CD4-positive, alpha-beta T cell (primary cell): ENCODE measurements at regions of chr13 and their contacts with region 1.

Region 1: GRCh38 chr13:109786457-109787134 is at the start of gene IRS2:
- DNase-seq: peak; percentile 90 to 98 (median 94)
- ATAC-seq: peak; percentile 80
- H3K4me3 ChIP-seq: peak within 1 kb of the TSS; percentile 67
- H3K4me3 Mint-ChIP-seq: peak within 1 kb of the TSS; percentile 94
- H3K27ac ChIP-seq: peak within 1 kb of the TSS in 1 of 2 donors; percentile 59
- H3K27ac Mint-ChIP-seq: peak within 1 kb of the TSS; percentile 75
- H3K4me1 ChIP-seq: peaks cover 34% of the 10 kb centered on the region
- H3K4me1 Mint-ChIP-seq: peaks cover 27% of the 10 kb centered on the region
- H3K27me3 ChIP-seq: no peaks in the 10 kb centered on the region
- H3K27me3 Mint-ChIP-seq: peaks cover 4% of the 10 kb centered on the region
- CTCF ChIP-seq: no peak
- total RNA-seq, gene IRS2: 188 to 193 TPM

Region 2: GRCh38 chr13:108961542-108962125 is 825.0 kb before region 1 on chr13:
- CTCF ChIA-PET with region 1: no interaction called
- POLR2A ChIA-PET with region 1: no interaction called
- intact Hi-C with region 1: loop called (anchors 1 kb)
- DNase-seq: peak in 4 of 14 experiments; percentile 1 to 66 (median 62)
- ATAC-seq: peak; percentile 54
- H3K4me3 ChIP-seq: no peak overlapping the region
- H3K4me3 Mint-ChIP-seq: no peak overlapping the region
- H3K27ac ChIP-seq: no peak overlapping the region
- H3K27ac Mint-ChIP-seq: no peak overlapping the region
- H3K4me1 ChIP-seq: no peaks in the 10 kb centered on the region
- H3K4me1 Mint-ChIP-seq: no peaks in the 10 kb centered on the region
- H3K27me3 ChIP-seq: no peaks in the 10 kb centered on the region
- H3K27me3 Mint-ChIP-seq: peaks cover 2% of the 10 kb centered on the region
- CTCF ChIP-seq: peak; percentile 91

Region 3: GRCh38 chr13:109427148-109427547 is 359.4 kb before region 1 on chr13:
- CTCF ChIA-PET with region 1: no interaction called
- POLR2A ChIA-PET with region 1: no interaction called
- intact Hi-C with region 1: loop called in 1 of 2 experiments (anchors 5 kb)
- DNase-seq: no peak
- ATAC-seq: no peak
- H3K4me3 ChIP-seq: no peak overlapping the region
- H3K4me3 Mint-ChIP-seq: no peak overlapping the region
- H3K27ac ChIP-seq: no peak overlapping the region
- H3K27ac Mint-ChIP-seq: no peak overlapping the region
- H3K4me1 ChIP-seq: no peaks in the 10 kb centered on the region
- H3K4me1 Mint-ChIP-seq: no peaks in the 10 kb centered on the region
- H3K27me3 ChIP-seq: no peaks in the 10 kb centered on the region
- H3K27me3 Mint-ChIP-seq: peaks cover 14% of the 10 kb centered on the region
- CTCF ChIP-seq: no peak

Region 4: GRCh38 chr13:109646423-109646822 is 140.2 kb before region 1 on chr13:
- CTCF ChIA-PET with region 1: no interaction called
- POLR2A ChIA-PET with region 1: no interaction called
- intact Hi-C with region 1: no loop called
- DNase-seq: no peak
- ATAC-seq: no peak
- H3K4me3 ChIP-seq: no peak overlapping the region
- H3K4me3 Mint-ChIP-seq: no peak overlapping the region
- H3K27ac ChIP-seq: no peak overlapping the region
- H3K27ac Mint-ChIP-seq: no peak overlapping the region
- H3K4me1 ChIP-seq: no peaks in the 10 kb centered on the region
- H3K4me1 Mint-ChIP-seq: no peaks in the 10 kb centered on the region
- H3K27me3 ChIP-seq: no peaks in the 10 kb centered on the region
- H3K27me3 Mint-ChIP-seq: peaks cover 3% of the 10 kb centered on the region
- CTCF ChIP-seq: no peak

Region 5: GRCh38 chr13:109756778-109757177 is 29.8 kb before region 1 on chr13:
- CTCF ChIA-PET with region 1: no interaction called
- POLR2A ChIA-PET with region 1: interaction called, 3 read pairs
- intact Hi-C with region 1: loop called in 1 of 2 experiments (anchors 5 kb)
- DNase-seq: no peak
- ATAC-seq: no peak
- H3K4me3 ChIP-seq: no peak overlapping the region
- H3K4me3 Mint-ChIP-seq: no peak overlapping the region
- H3K27ac ChIP-seq: no peak overlapping the region
- H3K27ac Mint-ChIP-seq: peak overlapping the region; percentile 26
- H3K4me1 ChIP-seq: peaks cover 2% of the 10 kb centered on the region
- H3K4me1 Mint-ChIP-seq: peaks cover 33% of the 10 kb centered on the region
- H3K27me3 ChIP-seq: no peaks in the 10 kb centered on the region
- H3K27me3 Mint-ChIP-seq: no peaks in the 10 kb centered on the region
- CTCF ChIP-seq: no peak

Region 6: DNA sequence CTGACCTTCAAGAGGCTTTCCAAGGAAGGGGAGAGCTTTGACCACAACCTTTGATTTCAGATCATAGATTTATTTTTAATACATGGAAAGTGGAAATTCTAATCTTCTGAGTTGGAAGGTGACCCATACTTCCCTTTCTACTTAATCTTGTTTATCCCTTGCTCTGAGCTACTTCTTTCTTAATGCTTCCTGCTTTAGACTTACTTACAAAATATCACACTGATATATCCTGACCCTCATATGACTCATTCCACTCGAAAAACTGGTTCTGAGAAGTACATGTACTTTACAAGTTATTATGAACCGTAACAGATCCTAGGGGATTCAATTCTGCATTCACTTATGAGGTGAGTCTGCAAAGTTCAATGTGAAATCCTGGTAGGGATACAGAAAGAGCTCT is 76.0 kb after region 1 on chr13:
- CTCF ChIA-PET with region 1: no interaction called
- POLR2A ChIA-PET with region 1: no interaction called
- intact Hi-C with region 1: no loop called
- DNase-seq: no peak
- ATAC-seq: no peak
- H3K4me3 ChIP-seq: no peak overlapping the region
- H3K4me3 Mint-ChIP-seq: no peak overlapping the region
- H3K27ac ChIP-seq: no peak overlapping the region
- H3K27ac Mint-ChIP-seq: no peak overlapping the region
- H3K4me1 ChIP-seq: no peaks in the 10 kb centered on the region
- H3K4me1 Mint-ChIP-seq: no peaks in the 10 kb centered on the region
- H3K27me3 ChIP-seq: peaks cover 11 to 21% of the 10 kb centered on the region in 2 experiments
- H3K27me3 Mint-ChIP-seq: peaks cover 61% of the 10 kb centered on the region
- CTCF ChIP-seq: no peak

Region 7: GRCh38 chr13:110715395-110716235 is 929.0 kb after region 1 on chr13:
- CTCF ChIA-PET with region 1: no interaction called
- POLR2A ChIA-PET with region 1: interaction called, 3 read pairs
- intact Hi-C with region 1: loop called in 1 of 2 experiments (anchors 10 kb)
- DNase-seq: peak; percentile 88 to 100 (median 94)
- ATAC-seq: peak; percentile 57
- H3K4me3 ChIP-seq: peak overlapping the region; percentile 98
- H3K4me3 Mint-ChIP-seq: peak overlapping the region; percentile 98
- H3K27ac ChIP-seq: peak overlapping the region; percentile 64 to 89
- H3K27ac Mint-ChIP-seq: peak overlapping the region; percentile 94
- H3K4me1 ChIP-seq: peaks cover 36% of the 10 kb centered on the region
- H3K4me1 Mint-ChIP-seq: peaks cover 41% of the 10 kb centered on the region
- H3K27me3 ChIP-seq: no peaks in the 10 kb centered on the region
- H3K27me3 Mint-ChIP-seq: peaks cover 4% of the 10 kb centered on the region
- CTCF ChIP-seq: no peak